MCF 10A (cell line): ENCODE measurements at regions of chr5 and their contacts with region 1.

Region 1: DNA sequence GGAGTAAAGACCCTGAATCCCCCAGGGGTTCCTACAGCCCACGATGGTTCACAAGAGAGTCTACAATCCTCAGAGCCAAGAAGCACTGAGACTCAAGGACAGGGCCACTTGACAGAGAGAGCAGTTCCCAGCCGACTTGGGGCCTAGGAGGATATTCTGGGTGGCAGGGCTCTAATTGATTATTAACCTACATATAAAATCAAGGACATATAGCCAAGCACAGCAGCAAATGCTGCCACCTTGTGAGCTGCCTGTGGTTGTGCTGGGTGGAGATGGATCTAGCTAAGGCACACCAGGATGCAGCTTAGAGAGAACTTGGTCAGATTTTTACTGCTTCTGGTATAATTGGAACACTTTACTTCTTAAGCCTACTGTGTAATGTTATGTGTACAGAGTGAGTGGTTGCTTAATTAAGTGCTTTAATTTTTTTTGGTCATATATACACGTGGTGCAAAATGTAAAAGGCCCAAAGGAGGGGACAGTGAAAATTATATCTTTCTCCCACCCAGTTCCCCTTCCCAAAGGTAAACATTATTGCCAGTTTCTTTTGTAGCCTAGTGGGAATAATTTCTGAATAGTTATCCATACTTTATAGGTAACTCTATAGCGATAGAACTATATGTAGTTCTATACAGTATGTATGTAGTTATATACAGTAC is 78.8 kb downstream of the F2RL2 start:
- DNase-seq: peak; percentile 54
- H3K4me3 Mint-ChIP-seq: no peak overlapping the region
- H3K27ac Mint-ChIP-seq: no peak overlapping the region
- H3K4me1 Mint-ChIP-seq: peaks cover 7% of the 10 kb centered on the region
- H3K27me3 Mint-ChIP-seq: no peaks in the 10 kb centered on the region
- CTCF ChIP-seq: peak; percentile 40

Region 2: DNA sequence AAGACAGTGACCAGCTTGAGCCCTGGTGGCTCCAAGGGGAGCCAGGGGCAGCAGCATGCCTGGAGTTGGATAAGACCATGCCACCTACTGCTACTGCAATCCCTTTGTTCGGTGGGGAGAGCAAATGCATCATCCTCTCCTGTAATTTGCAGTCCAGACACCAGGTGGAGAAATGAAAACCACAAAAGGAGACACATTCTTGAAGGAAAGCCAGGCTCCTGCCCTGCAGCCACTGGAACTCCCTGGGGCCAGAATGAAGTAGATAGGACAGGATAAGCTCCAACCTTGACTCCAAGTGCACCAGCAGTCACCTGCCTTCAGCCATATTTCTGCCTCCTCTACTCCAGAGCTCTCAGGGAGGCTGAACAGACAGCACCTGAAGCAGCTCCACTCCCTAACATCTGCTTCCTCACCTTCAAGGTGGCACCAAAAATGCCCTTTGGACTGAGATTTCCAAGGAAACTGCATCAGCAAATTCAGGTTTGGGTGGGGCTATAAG is 206.4 kb before region 1 on chr5:
- CTCF ChIA-PET with region 1: interaction called, 27 read pairs
- POLR2A ChIA-PET with region 1: no interaction called
- intact Hi-C with region 1: loop called (anchors 1 kb)
- DNase-seq: peak; percentile 84
- H3K4me3 Mint-ChIP-seq: no peak overlapping the region
- H3K27ac Mint-ChIP-seq: no peak overlapping the region
- H3K4me1 Mint-ChIP-seq: no peaks in the 10 kb centered on the region
- H3K27me3 Mint-ChIP-seq: no peaks in the 10 kb centered on the region
- CTCF ChIP-seq: peak; percentile 69

Region 3: DNA sequence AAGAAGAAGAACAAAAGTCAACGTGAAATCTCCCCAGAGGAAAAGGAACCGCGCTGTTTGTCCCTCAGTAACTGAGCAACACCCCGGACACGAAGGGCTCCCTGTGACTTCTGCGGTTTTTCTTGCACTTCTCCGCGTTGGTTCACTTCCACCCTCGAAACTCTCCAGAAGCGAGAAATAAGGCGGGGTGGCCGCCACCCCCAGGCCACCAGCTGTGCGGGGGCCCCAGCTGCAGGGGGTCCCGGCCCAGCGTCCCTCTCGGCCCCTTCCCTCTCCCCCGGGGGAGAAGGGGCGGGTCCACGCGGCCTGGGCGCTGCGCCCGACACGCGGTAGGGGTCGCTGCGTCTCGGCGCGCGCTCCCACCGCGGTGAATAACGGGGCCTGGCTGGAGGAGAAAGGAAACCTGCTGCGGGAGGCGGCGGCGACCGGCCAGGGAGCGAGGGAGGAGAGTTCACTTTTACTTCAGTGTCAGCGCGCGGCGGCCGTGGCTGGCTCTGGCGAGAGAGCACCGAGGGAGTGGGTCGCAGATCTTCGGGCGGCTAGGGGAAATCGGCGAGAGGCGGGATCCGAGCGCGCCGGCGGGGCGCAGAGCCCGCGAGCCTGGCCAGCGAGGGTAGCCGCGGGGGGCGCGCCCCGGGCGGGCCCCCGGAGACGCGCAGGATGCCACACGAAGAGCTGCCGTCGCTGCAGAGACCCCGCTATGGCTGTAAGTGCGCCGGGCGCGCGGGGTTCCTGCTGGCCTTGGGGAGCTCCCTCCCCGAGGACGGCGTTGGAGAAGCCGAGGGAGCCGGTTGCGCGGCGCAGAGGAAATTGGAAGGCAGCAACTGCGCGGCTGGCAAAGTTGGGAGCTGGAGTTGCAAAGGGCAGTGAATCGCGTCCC is 141.3 kb before region 1 on chr5 and contains the start of gene IQGAP2:
- CTCF ChIA-PET with region 1: no interaction called
- POLR2A ChIA-PET with region 1: no interaction called
- intact Hi-C with region 1: loop called (anchors 1 kb)
- DNase-seq: peak; percentile 67
- H3K4me3 Mint-ChIP-seq: peak within 1 kb of the TSS; percentile 76
- H3K27ac Mint-ChIP-seq: no peak within 1 kb of the TSS
- H3K4me1 Mint-ChIP-seq: no peaks in the 10 kb centered on the region
- H3K27me3 Mint-ChIP-seq: peaks cover 50% of the 10 kb centered on the region
- CTCF ChIP-seq: peak; percentile 59
- total RNA-seq, gene IQGAP2: 0.93 and 1.5 TPM in 2 replicates